PC-3 (cell line): ENCODE measurements at regions of chr12 and their contacts with region 1.

Region 1: GRCh38 chr12:49296034-49296835 is 1.3 kb downstream of the PRPH start:
- DNase-seq: peak; percentile 64
- ATAC-seq: peak; percentile 41
- H3K4me3 ChIP-seq: peak overlapping the region; percentile 68
- H3K27ac ChIP-seq: no peak overlapping the region
- H3K4me1 ChIP-seq: peaks cover 12% of the 10 kb centered on the region
- H3K27me3 ChIP-seq: no peaks in the 10 kb centered on the region
- CTCF ChIP-seq: peak; percentile 88

Region 2: DNA sequence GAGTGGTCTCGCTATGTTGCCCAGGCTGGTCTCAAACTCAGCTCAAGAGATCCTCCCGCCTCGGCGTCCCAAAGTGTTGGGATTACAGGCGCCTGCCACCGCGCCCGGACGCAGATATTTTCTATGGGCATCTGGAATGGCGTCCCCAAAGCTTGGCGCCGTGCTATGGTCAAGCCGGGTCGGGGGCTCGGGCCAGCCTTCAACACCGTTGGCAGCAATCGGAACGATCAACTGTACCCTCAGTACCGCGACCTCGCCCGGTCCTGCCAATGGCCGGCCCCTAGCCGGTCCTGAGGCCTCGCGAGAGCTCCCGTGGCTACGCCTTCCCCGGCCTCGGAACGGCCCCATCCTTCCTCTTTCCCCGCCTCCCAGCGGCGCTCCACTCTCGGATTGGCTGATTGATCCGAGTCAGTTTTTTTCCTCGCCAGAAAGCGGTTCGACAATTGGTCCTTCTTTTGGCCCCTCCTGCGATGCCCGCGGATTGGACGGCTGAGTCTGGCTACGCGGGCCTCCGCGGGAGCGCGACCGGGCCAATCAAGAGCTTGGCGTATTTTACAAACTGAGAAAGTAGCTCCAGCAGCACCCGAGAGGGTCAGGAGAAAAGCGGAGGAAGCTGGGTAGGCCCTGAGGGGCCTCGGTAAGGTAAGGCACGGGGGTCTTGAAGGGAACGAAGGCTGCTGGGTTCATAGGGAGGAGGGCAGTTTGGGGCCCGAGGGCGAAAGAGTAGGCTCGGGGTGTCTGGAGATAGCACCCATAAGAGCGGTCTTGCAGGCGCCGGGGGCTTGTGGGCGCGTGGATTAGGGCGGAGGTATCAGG is 26.7 kb after region 1 on chr12 and contains the start of gene TROAP:
- CTCF ChIA-PET with region 1: interaction called, 12 read pairs
- POLR2A ChIA-PET with region 1: interaction called, 3 read pairs
- intact Hi-C with region 1: no loop called
- DNase-seq: peak; percentile 99
- ATAC-seq: peak; percentile 99
- H3K4me3 ChIP-seq: peak within 1 kb of the TSS; percentile 87
- H3K27ac ChIP-seq: 0 out of 2 replicates have a peak within 1 kb of the TSS, but pooled peaks have one; percentile 9
- H3K4me1 ChIP-seq: peaks cover 12% of the 10 kb centered on the region; the same call in 1 of the 2 replicates
- H3K27me3 ChIP-seq: no peaks in the 10 kb centered on the region
- CTCF ChIP-seq: no peak
- total RNA-seq, gene TROAP: 99.2 and 103 TPM in 2 replicates

Region 3: GRCh38 chr12:49331380-49332222 is 35.4 kb after region 1 on chr12:
- CTCF ChIA-PET with region 1: interaction called, 14 read pairs
- POLR2A ChIA-PET with region 1: no interaction called
- intact Hi-C with region 1: no loop called
- DNase-seq: peak; percentile 66
- ATAC-seq: peak; percentile 90
- H3K4me3 ChIP-seq: no peak overlapping the region
- H3K27ac ChIP-seq: no peak overlapping the region
- H3K4me1 ChIP-seq: no peaks in the 10 kb centered on the region
- H3K27me3 ChIP-seq: no peaks in the 10 kb centered on the region
- CTCF ChIP-seq: peak; percentile 88

Region 4: DNA sequence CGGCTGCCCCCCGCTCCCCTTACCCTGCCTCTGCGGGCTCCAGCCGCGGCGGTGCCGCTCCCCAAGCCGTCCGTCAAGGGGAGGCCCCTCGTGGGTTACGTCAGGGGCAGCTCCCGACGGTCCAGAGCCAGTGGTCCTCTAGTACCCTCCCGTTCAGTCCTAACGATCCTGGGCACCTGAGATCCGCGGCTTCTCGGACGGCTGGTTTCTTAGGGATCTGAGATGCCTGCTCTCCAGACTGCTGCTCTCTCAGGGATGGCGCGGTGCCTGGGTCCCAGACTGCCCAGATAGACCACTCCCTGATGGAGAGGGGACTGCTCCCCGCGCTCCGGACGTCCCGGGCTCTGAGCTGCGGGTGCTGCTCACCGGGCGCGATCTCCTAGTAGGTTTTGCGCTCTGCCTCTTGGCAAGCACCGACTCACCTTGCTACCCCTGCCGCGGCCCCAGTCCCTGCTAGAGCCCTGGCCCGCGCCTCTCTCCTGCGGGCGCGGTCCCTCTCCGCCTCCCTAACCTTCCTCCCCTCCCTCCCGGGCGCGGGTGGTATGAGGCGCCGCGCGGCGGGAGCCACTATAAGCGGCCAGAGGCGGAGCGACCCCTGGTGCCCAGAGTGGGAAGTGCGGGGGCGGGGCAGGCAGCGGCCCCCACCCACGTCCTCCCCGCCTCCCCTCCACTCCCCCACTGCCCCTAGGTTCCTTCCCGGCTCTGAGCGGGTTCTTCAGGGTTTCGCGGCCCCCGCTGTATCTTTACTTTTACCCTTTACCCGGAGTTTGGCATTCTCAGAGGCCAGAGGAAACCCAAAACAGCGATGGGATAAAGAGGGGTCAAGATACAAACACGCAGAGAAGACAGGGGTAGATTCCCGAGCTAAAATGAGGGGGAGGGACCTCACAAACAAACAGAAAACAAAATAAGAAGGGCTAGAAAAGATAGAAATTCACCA is 40.7 kb after region 1 on chr12 and contains the start of gene C1QL4:
- CTCF ChIA-PET with region 1: interaction called, 14 read pairs
- POLR2A ChIA-PET with region 1: no interaction called
- intact Hi-C with region 1: loop called (anchors 1 kb)
- DNase-seq: peak; percentile 86
- ATAC-seq: peak; percentile 85
- H3K4me3 ChIP-seq: peak within 1 kb of the TSS; percentile 78
- H3K27ac ChIP-seq: no peak within 1 kb of the TSS
- H3K4me1 ChIP-seq: no peaks in the 10 kb centered on the region
- H3K27me3 ChIP-seq: no peaks in the 10 kb centered on the region
- CTCF ChIP-seq: peak; percentile 92
- total RNA-seq, gene C1QL4: 5.3 and 6.9 TPM in 2 replicates

Region 5: DNA sequence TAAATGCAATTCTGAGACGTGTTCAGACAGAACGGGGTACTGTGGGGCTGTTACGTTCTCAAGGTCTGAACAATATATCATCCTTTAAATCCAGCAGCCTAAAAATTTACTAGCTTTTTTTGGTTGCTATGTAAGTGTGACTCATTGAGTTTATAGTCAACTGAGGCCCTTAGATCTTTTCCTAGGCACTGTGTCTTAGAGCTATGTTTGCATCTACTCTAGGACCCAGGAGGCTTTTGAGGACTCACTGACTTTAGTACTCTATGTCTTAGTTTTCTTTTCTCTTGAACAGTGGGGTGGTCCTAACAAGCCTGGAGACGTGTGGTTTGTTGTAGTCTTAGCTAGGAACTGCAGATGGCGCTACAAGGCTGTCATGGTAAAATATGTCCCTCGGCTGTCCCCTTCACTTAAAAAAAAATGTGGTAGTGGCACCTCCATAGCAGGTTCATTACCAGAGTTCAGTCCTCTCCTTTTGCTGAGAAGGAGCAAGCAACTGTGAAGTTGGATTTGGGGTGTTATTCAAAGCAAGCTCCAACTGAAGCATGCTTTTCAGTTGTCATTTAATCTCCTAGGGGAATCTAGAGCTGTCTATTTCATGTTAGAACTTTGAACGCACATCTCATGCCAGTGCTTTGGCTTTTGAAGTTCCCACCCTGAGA is 62.4 kb after region 1 on chr12:
- CTCF ChIA-PET with region 1: interaction called, 10 read pairs
- POLR2A ChIA-PET with region 1: no interaction called
- intact Hi-C with region 1: no loop called
- DNase-seq: peak; percentile 63
- ATAC-seq: peak; percentile 89
- H3K4me3 ChIP-seq: 0 out of 2 replicates have a peak overlapping the region, but pooled peaks have one; percentile 2
- H3K27ac ChIP-seq: no peak overlapping the region
- H3K4me1 ChIP-seq: peaks cover 21% of the 10 kb centered on the region
- H3K27me3 ChIP-seq: no peaks in the 10 kb centered on the region
- CTCF ChIP-seq: peak; percentile 92

Region 6: DNA sequence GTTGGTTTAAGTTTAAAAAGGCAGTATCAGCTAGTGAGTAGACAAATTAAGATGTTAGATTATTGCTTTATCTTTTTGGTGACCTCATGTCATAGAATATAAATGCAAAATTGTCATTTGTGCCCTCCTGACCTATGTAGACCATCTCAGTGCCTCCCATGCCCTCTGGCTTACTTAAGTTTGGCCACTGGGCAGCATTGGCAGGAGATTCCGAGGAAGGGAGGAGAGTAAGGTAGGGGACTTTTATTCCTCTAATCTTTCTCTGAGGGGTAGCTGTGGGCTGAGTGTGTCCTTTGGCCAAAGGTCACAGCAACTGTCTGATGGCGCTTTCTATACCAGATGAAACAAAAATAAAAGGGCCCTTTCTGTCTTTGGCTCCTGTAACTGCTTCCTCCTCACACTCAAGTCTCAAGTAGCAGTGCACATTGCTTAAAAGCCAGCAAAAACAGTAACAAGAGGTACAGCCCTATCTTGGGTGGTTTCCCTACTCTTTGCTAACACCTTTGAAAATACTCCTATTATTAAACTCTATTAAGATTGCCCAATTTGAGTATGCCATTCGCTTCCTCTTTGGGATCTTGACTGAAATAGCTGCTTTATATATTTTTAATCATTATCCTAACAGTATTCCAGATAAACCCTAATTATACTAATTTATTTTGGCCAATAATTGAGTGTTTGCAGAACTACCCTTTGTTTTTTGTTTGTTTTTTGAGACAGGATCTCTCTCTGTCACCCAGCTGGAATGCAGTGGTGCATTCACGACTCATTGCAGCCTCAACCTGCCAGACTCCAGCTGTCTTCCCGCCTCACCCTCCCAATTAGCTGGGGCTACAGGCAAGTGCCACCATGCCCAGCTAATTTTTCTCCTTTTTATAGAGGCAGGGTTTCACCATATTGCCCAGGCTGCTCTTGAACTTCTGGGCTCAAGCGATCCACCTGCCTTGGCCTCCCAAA is 186.1 kb after region 1 on chr12:
- CTCF ChIA-PET with region 1: no interaction called
- POLR2A ChIA-PET with region 1: no interaction called
- intact Hi-C with region 1: no loop called
- DNase-seq: peak; percentile 45
- ATAC-seq: peak; percentile 80
- H3K4me3 ChIP-seq: no peak overlapping the region
- H3K27ac ChIP-seq: no peak overlapping the region
- H3K4me1 ChIP-seq: peaks cover 23% of the 10 kb centered on the region
- H3K27me3 ChIP-seq: no peaks in the 10 kb centered on the region
- CTCF ChIP-seq: no peak